ENCODE measurements at regions of chr12 and their contacts with region 1.

Region 1: DNA sequence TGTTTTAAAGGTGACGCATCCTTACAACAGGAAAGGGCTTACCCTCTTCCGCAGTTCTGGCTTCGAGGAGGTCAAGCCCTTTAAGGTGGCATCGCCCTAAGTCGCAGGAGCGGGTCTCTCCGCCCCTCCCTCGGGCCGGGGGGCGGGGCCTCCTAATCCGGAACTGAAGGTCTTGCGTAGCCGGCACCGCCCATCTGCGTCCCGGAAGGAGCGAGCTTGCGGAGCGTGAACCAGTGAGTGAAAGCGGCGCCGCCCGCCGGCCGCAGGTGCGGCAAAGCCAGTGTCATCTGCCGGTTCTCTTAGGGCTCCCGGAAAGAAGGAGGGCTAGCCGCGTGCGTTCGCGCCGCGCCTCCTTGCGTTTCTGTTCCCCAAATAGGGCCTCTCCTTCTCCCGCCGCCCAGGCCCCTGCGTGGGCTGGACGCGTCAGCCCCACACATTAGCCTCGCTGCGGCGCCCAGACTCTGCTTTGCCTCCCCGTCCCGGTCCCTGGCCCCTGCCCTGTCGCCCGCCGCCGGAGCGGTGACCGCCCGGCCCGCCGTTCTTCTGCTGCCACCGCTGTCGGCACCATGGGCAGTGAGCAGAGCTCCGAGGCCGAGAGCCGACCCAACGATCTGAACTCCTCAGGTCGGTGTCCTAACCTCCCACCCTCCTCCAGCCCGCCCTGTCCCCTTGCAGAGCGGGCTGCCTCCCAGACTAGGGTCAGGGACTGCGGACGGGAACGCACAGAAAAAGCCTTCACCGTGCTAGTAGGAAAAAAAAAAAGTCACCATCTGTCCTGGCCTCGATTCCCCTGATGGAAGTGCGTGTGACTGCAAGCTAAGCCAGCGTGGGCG is at the start of gene BORCS5:
- DNase-seq: peak; percentile 100
- ATAC-seq: peak; percentile 92
- H3K4me3 ChIP-seq: peak within 1 kb of the TSS; percentile 74 to 93 (median 81)
- H3K4me3 Mint-ChIP-seq: peak within 1 kb of the TSS; percentile 92
- H3K27ac ChIP-seq: peak within 1 kb of the TSS; percentile 91 to 95
- H3K27ac Mint-ChIP-seq: peak within 1 kb of the TSS; percentile 94
- H3K4me1 ChIP-seq: peaks cover 21 to 25% of the 10 kb centered on the region in 2 donors
- H3K4me1 Mint-ChIP-seq: peaks cover 31% of the 10 kb centered on the region
- H3K27me3 ChIP-seq: no peaks in the 10 kb centered on the region
- H3K27me3 Mint-ChIP-seq: peaks cover 3% of the 10 kb centered on the region
- CTCF ChIP-seq: peak; percentile 11
- total RNA-seq, gene BORCS5: 46.2 and 51.7 TPM in 2 replicates

Region 2: DNA sequence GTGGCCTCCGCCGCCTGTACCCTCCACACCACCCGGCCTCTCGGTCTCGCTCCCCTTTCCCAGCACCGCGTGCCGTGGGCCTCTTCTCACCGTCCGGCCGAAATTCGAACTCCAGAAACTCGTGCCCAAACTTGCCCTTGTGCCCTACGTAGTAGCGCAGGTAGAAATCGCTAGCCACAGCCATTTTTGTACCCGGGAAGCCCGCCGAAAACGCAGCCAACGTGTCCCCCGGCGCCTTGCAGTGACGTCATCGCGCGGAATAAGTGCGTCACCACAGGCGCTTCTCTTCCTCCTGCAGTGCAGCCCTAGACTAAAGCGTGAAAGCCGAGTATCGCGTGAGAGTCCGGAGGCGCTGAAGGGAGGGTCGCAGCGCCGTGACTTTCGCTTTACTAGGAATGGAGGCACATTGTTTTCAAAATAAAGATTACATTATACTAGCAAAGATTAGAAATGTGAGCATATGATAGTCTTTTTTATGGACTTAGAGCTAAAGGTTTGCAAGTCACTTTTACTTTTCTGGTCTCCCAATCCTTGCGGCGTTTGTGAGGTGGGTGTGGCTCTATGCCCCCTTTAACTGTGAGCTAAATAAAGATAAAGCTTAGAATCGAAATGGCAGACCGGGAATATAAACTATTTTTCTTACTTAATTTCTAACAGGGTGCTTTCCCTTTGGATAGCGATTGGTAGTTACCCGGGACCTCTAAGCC is 1743.6 kb before region 1 on chr12 and contains the start of gene MAGOHB:
- CTCF ChIA-PET with region 1: no interaction called
- POLR2A ChIA-PET with region 1: no interaction called
- intact Hi-C with region 1: loop called (anchors 1 kb)
- DNase-seq: peak; percentile 98
- ATAC-seq: peak; percentile 96
- H3K4me3 ChIP-seq: peak within 1 kb of the TSS; percentile 71 to 99 (median 88)
- H3K4me3 Mint-ChIP-seq: peak within 1 kb of the TSS; percentile 99
- H3K27ac ChIP-seq: peak within 1 kb of the TSS; percentile 85 to 96
- H3K27ac Mint-ChIP-seq: peak within 1 kb of the TSS; percentile 100
- H3K4me1 ChIP-seq: peaks cover 11 to 19% of the 10 kb centered on the region in 2 donors
- H3K4me1 Mint-ChIP-seq: peaks cover 23% of the 10 kb centered on the region
- H3K27me3 ChIP-seq: no peaks in the 10 kb centered on the region
- H3K27me3 Mint-ChIP-seq: peaks cover 10% of the 10 kb centered on the region
- CTCF ChIP-seq: no peak
- total RNA-seq, gene MAGOHB: 16.0 and 19.1 TPM in 2 replicates

Region 3: GRCh38 chr12:12266873-12267741 is 90.0 kb before region 1 on chr12 and contains the start of gene LRP6:
- CTCF ChIA-PET with region 1: no interaction called
- POLR2A ChIA-PET with region 1: no interaction called
- intact Hi-C with region 1: loop called (anchors 2 kb)
- DNase-seq: peak; percentile 84
- ATAC-seq: peak; percentile 83
- H3K4me3 ChIP-seq: peak within 1 kb of the TSS; percentile 41 to 77 (median 67)
- H3K4me3 Mint-ChIP-seq: peak within 1 kb of the TSS; percentile 90
- H3K27ac ChIP-seq: no peak within 1 kb of the TSS
- H3K27ac Mint-ChIP-seq: peak within 1 kb of the TSS; percentile 61
- H3K4me1 ChIP-seq: peaks cover 15 to 17% of the 10 kb centered on the region in 2 donors
- H3K4me1 Mint-ChIP-seq: peaks cover 21% of the 10 kb centered on the region
- H3K27me3 ChIP-seq: peaks cover 0 to 36% (median 25%) of the 10 kb centered on the region in 4 experiments
- H3K27me3 Mint-ChIP-seq: peaks cover 39% of the 10 kb centered on the region
- CTCF ChIP-seq: no peak
- total RNA-seq, gene LRP6: 2.8 TPM in 2 replicates

Region 4: DNA sequence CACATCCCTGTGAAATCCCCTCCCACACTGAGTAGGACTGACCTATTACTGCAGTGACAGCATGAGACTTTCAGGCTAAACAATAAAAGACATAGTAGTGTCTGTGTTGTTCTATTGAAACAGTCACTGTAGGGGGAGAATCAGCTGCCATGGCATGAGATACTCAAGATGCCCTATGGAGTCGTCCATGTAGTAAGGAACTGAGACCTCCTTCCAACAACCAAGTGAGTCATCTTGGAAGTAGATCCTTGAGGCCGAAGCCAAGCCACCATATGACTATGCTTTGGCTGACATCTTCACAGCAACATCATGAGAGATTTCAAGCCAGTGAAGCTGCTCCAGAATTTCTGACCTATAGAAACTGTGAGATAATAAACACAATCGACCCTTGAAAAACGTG is 78.2 kb before region 1 on chr12:
- CTCF ChIA-PET with region 1: no interaction called
- POLR2A ChIA-PET with region 1: no interaction called
- intact Hi-C with region 1: no loop called
- DNase-seq: no peak
- ATAC-seq: no peak
- H3K4me3 ChIP-seq: no peak overlapping the region
- H3K4me3 Mint-ChIP-seq: no peak overlapping the region
- H3K27ac ChIP-seq: no peak overlapping the region
- H3K27ac Mint-ChIP-seq: no peak overlapping the region
- H3K4me1 ChIP-seq: no peaks in the 10 kb centered on the region
- H3K4me1 Mint-ChIP-seq: no peaks in the 10 kb centered on the region
- H3K27me3 ChIP-seq: peaks cover 0 to 3% (median 1%) of the 10 kb centered on the region in 4 experiments
- H3K27me3 Mint-ChIP-seq: peaks cover 18% of the 10 kb centered on the region
- CTCF ChIP-seq: no peak

Region 5: DNA sequence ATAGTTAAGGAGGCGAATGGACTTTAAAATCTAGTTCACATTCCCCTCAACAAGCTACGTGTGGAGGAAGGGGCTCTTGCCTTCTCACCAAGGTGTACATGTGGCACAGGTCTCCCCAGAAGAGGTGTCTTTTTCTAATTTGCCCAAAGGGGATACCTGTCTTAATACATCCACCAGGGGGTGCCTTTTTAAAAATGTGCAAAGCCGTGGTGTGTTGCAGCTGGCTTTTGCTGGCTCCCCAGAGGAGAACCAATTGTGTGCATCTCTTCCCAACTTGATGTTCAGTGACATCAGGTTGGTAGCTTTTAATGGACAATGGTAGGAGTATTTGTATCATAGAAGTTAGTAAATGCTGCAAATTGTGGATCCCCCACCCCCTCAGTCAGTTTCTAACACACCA is 288.4 kb after region 1 on chr12:
- CTCF ChIA-PET with region 1: interaction called, 7 read pairs
- POLR2A ChIA-PET with region 1: no interaction called
- intact Hi-C with region 1: loop called (anchors 5 kb)
- DNase-seq: peak; percentile 75
- ATAC-seq: peak; percentile 83
- H3K4me3 ChIP-seq: no peak overlapping the region
- H3K4me3 Mint-ChIP-seq: no peak overlapping the region
- H3K27ac ChIP-seq: no peak overlapping the region
- H3K27ac Mint-ChIP-seq: no peak overlapping the region
- H3K4me1 ChIP-seq: no peaks in the 10 kb centered on the region
- H3K4me1 Mint-ChIP-seq: peaks cover 4% of the 10 kb centered on the region
- H3K27me3 ChIP-seq: no peaks in the 10 kb centered on the region
- H3K27me3 Mint-ChIP-seq: no peaks in the 10 kb centered on the region
- CTCF ChIP-seq: peak; percentile 71

Region 6: DNA sequence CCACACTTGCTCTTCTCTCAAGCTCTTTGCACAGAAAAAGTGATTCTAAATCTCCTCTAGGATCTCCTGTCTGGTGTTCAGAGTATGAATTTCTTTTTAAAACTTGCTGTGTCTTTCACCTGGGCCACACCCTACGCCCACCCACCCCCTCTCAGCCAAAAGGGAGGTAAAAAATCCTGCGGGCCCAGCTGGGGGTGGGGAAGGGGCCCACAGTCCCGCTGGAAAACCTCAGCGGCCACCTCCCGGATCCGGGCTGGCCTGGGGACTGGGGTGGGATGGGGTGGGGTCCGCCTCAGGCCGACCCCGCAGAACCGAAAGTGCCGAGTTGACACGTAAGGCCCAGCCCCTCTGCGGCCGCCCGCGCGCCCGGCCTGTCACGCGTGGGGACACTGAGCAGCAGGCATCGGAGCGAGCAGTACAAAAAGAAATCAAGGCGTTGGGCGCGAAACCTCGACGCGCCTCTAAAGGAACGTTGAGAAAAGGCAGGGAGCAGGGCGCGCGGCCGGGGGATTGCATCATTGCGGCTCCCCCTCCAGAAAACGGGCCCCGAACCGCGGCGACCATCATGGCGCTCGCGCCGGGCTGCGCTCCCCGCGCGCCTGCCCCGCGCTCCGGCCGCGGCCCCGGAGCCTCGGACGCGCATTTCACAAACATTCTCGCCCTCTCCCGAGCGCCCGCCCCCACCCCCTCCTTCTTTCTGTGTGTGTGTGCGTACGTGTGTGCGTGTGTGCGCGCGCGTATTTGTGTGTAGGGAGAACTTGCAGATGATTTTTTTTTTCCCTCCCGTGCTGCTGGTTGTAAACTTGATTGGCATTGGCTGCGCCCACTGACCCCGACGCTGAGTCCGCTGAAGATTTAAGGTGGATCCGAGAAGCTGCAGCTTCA is 367.8 kb after region 1 on chr12:
- CTCF ChIA-PET with region 1: interaction called, 4 read pairs
- POLR2A ChIA-PET with region 1: interaction called, 45 read pairs
- intact Hi-C with region 1: loop called (anchors 1 kb)
- DNase-seq: no peak
- ATAC-seq: peak; percentile 65
- H3K4me3 ChIP-seq: peak overlapping the region; percentile 74 to 88 (median 78)
- H3K4me3 Mint-ChIP-seq: peak overlapping the region; percentile 87
- H3K27ac ChIP-seq: peak overlapping the region; percentile 94 to 97
- H3K27ac Mint-ChIP-seq: peak overlapping the region; percentile 94
- H3K4me1 ChIP-seq: peaks cover 22 to 30% of the 10 kb centered on the region in 2 donors
- H3K4me1 Mint-ChIP-seq: peaks cover 52% of the 10 kb centered on the region
- H3K27me3 ChIP-seq: no peaks in the 10 kb centered on the region
- H3K27me3 Mint-ChIP-seq: no peaks in the 10 kb centered on the region
- CTCF ChIP-seq: peak; percentile 10

Region 7: GRCh38 chr12:12813120-12814101 is 456.3 kb after region 1 on chr12 and contains the start of gene DDX47:
- CTCF ChIA-PET with region 1: no interaction called
- POLR2A ChIA-PET with region 1: no interaction called
- intact Hi-C with region 1: loop called (anchors 1 kb)
- DNase-seq: peak; percentile 96
- ATAC-seq: peak; percentile 75
- H3K4me3 ChIP-seq: peak within 1 kb of the TSS; percentile 81 to 100 (median 94)
- H3K4me3 Mint-ChIP-seq: peak within 1 kb of the TSS; percentile 91
- H3K27ac ChIP-seq: peak within 1 kb of the TSS; percentile 86 to 94
- H3K27ac Mint-ChIP-seq: peak within 1 kb of the TSS; percentile 91
- H3K4me1 ChIP-seq: peaks cover 24 to 41% of the 10 kb centered on the region in 2 donors
- H3K4me1 Mint-ChIP-seq: peaks cover 66% of the 10 kb centered on the region
- H3K27me3 ChIP-seq: no peaks in the 10 kb centered on the region
- H3K27me3 Mint-ChIP-seq: no peaks in the 10 kb centered on the region
- CTCF ChIP-seq: peak; percentile 92
- total RNA-seq, gene DDX47: 89.1 and 93.7 TPM in 2 replicates

Measured in B cell (primary cell).